ENCODE measurements at regions of chr17 and their contacts with region 1.

Region 1: DNA sequence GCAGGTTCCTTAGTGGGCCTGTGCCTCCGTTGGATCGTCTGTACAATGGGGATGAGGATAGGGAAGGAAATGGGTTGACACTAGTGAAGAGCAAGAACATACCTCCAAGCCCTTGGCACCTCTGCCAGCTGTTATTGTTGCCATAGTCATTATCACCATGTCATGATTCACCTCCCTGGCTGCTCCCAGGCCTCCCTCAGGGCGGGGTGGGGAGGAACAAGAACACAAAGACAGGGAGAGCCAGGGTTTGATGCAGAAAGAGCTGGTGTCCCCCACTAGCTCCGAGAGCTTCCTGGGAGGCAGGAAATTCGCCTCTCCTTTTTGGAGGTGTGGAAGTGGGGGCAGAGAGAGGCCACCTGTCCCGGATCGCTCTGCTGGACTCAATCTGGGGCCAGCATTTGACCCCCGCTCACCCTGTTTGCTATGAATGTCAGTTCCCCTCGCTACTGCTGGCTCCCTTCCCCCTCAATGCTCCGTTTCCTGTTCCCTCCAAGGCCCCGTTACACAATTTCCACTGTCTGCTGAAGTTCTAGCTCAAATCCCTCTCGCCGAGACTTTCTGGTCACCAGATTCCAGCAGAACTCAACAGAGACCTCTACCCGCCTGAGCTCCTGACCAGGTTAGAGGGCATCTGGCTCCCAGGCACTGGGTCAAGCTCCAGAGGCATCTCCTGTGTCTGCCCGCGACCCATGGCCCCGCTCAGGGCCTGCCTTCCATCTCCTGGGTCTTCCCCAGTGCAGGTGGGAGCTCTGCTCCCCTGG is 9.1 kb downstream of the TIMP2 start:
- DNase-seq: peak; percentile 94
- H3K4me3 ChIP-seq: peak overlapping the region; percentile 1 to 42 (median 18)
- H3K27ac ChIP-seq: peak overlapping the region; percentile 82 to 93 (median 84)
- H3K4me1 ChIP-seq: peaks cover 54 to 99% (median 97%) of the 10 kb centered on the region in 4 donors
- H3K27me3 ChIP-seq: no peaks in the 10 kb centered on the region
- CTCF ChIP-seq: no peak
- EP300 ChIP-seq: no peak
- POLR2A ChIP-seq: no peak

Region 2: DNA sequence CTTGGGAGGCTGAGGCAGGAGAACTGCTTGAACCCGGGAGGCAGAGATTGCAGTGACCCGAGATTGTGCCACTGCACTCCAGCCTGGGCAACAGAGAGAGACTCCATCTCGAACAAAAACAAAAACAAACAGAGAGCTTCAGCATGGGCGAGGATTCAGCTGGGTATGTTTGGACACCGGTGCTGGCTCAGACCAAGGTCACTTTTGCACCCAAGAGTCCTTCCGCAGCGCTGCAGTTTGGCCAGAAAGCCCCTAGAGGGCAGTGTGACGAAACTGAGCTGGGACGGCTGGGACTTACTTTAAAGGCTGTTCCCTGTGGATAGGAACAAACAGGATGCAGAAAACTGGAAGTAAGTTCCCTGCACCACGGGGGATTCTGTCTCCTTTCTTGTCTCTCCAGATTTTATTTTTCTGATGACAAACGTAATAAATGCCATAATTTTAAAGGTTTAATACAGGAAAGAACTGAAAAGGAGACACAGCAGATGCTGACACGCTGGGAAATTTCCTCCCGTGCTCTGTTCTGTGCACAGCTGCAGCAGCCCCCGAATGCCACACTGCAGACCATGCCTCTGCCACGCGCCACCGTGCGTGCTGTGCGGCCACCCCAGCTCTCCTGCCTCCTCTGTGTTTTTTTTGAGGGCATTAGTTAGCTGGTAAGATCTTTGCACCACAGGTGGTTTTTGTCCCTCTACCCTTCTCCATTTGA is 50.2 kb before region 1 on chr17:
- intact Hi-C with region 1: loop called (anchors 5 kb)
- DNase-seq: peak; percentile 96
- H3K4me3 ChIP-seq: peak overlapping the region in 3 of 4 donors; percentile 20 to 34 (median 21)
- H3K27ac ChIP-seq: peak overlapping the region; percentile 38 to 61 (median 59)
- H3K4me1 ChIP-seq: peaks cover 16 to 56% (median 50%) of the 10 kb centered on the region in 4 donors
- H3K27me3 ChIP-seq: no peaks in the 10 kb centered on the region
- CTCF ChIP-seq: peak; percentile 86 to 97 (median 94)
- EP300 ChIP-seq: no peak
- POLR2A ChIP-seq: no peak